Colonic mucosa (tissue), 4 donors: ENCODE measurements at regions of chr7 and their contacts with region 1.

Region 1: DNA sequence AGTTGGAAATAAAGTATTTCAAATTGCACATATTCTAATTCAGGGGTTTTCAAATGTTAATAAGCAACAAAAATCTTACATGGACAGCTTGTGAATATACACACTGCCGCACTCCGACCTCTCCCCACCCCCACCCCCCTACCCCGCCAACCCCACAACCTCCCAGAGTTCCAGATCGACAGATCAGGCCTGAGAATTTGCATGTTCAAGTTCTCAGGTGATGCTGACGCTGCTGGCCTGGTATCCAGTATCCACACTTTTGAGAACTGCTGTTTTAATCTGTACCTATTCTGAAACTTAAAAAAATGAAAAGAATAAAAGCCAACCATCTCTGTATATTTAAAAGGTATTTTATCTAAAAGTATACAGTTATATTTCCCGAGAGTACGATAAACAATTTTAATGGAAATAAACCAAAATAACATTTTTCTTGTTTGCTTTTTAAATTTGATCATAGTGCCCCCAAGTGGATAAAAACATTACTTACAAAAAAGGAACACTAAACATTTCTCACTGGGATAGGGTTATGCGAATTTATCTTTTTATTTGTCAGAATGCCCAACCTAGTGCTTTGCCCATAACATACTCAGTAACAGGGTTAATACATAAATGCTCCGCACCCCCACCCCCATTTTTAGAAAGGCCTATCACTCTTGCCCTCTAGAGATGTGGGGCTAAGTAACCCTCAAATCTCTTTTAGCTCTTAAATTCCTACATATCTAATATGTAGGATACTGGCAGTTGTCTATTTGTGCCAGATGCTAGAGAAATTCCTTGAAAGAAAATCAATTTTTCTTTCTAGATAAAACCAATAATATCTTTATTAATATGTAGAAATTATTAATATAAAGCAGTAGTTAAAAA is 166.3 kb downstream of the RNF133 start:
- DNase-seq: no peak
- H3K4me3 ChIP-seq: no peak overlapping the region
- H3K27ac ChIP-seq: no peak overlapping the region
- H3K4me1 ChIP-seq: no peaks in the 10 kb centered on the region
- H3K27me3 ChIP-seq: no peaks in the 10 kb centered on the region
- CTCF ChIP-seq: peak; percentile 13

Region 2: GRCh38 chr7:122092964-122093797 is 439.5 kb before region 1 on chr7:
- intact Hi-C with region 1: loop called (anchors 5 kb)
- DNase-seq: peak; percentile 73
- H3K4me3 ChIP-seq: no peak overlapping the region
- H3K27ac ChIP-seq: no peak overlapping the region
- H3K4me1 ChIP-seq: no peaks in the 10 kb centered on the region
- H3K27me3 ChIP-seq: no peaks in the 10 kb centered on the region
- CTCF ChIP-seq: peak; percentile 83

Region 3: DNA sequence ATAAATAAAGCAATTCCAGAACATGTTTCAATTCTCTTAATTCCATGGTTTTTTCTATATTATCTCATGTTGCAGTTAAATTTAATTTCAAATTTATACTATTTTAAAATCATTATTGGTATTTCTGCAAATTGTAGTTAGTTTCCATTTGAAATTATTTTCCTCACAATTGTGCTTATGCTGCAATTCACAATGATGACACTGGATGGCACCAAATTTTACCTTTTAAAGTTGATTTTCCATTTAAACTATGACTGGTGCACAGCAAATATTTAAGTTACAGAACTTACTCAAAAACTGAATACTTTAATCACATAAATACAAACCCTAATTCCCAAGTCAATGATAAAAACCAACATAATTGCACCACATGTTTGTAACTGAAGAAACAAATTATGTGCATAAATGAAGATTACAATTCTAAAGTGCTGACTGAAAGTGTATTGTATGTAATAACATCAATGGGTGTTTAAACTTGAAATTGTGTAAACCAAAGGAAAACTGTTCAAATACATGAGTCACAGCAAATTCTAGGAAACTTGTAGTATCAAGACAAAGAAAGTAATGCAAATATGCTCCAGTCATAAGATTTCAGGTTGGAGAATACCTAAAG is 313.3 kb before region 1 on chr7:
- intact Hi-C with region 1: loop called (anchors 5 kb)
- DNase-seq: no peak
- H3K4me3 ChIP-seq: no peak overlapping the region
- H3K27ac ChIP-seq: no peak overlapping the region
- H3K4me1 ChIP-seq: no peaks in the 10 kb centered on the region
- H3K27me3 ChIP-seq: no peaks in the 10 kb centered on the region
- CTCF ChIP-seq: peak; percentile 64

Region 4: GRCh38 chr7:122561326-122561725 is 28.7 kb after region 1 on chr7:
- intact Hi-C with region 1: no loop called
- DNase-seq: no peak
- H3K4me3 ChIP-seq: no peak overlapping the region
- H3K27ac ChIP-seq: no peak overlapping the region
- H3K4me1 ChIP-seq: no peaks in the 10 kb centered on the region
- H3K27me3 ChIP-seq: no peaks in the 10 kb centered on the region
- CTCF ChIP-seq: no peak